WTC11 (cell line): ENCODE measurements at regions of chr3 and their contacts with region 1.

Region 1: GRCh38 chr3:42229942-42230688 is 35.9 kb downstream of the CCK start:
- DNase-seq: no peak
- ATAC-seq: peak; percentile 72
- H3K4me3 Mint-ChIP-seq: no peak overlapping the region
- H3K27ac Mint-ChIP-seq: no peak overlapping the region
- H3K4me1 Mint-ChIP-seq: peaks cover 2% of the 10 kb centered on the region
- H3K27me3 Mint-ChIP-seq: peaks cover 2% of the 10 kb centered on the region; the same call in 1 of the 2 replicates
- CTCF ChIP-seq: peak; percentile 24; the same call in 1 of the 2 replicates

Region 2: GRCh38 chr3:41863024-41863423 is 367.1 kb before region 1 on chr3:
- CTCF ChIA-PET with region 1: no interaction called
- POLR2A ChIA-PET with region 1: no interaction called
- DNase-seq: peak; percentile 52
- ATAC-seq: peak; percentile 100
- H3K4me3 Mint-ChIP-seq: no peak overlapping the region
- H3K27ac Mint-ChIP-seq: no peak overlapping the region
- H3K4me1 Mint-ChIP-seq: no peaks in the 10 kb centered on the region
- H3K27me3 Mint-ChIP-seq: no peaks in the 10 kb centered on the region
- CTCF ChIP-seq: peak; percentile 31; the same call in 1 of the 2 replicates

Region 3: DNA sequence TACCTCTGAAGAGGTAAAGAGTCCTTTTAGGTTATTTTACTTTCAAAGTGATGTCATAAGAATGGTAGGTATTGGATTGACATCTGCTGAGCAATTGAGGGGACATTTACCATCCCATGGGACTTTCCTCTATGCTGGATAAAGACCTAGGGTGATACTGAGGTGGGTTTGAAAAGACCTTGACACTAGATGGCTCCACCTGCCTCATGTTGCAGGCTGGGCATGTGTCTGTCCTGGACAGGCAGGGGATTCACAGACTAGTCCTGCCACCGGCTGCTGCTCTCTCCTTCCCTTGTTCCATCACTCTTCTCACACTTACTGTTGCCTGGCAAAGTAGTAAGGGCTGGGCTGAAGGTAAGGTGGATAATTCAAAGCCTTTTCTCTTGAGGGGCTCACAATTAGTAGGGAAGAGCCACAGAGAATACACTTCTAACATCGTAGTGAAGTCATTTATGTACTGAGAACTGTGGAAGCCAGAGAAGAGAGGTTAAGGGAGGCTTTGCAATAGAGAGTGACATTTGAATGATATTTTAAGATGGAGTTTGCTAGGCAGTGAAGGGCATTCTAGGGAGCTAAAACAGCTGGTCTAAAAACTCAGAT is 111.3 kb before region 1 on chr3:
- CTCF ChIA-PET with region 1: interaction called, 17 read pairs
- POLR2A ChIA-PET with region 1: no interaction called
- DNase-seq: peak; percentile 54
- ATAC-seq: peak; percentile 86
- H3K4me3 Mint-ChIP-seq: no peak overlapping the region
- H3K27ac Mint-ChIP-seq: peak overlapping the region; percentile 37; the same call in 1 of the 2 replicates
- H3K4me1 Mint-ChIP-seq: peaks cover 42% of the 10 kb centered on the region
- H3K27me3 Mint-ChIP-seq: no peaks in the 10 kb centered on the region
- CTCF ChIP-seq: peak; percentile 34; the same call in 1 of the 2 replicates

Region 4: DNA sequence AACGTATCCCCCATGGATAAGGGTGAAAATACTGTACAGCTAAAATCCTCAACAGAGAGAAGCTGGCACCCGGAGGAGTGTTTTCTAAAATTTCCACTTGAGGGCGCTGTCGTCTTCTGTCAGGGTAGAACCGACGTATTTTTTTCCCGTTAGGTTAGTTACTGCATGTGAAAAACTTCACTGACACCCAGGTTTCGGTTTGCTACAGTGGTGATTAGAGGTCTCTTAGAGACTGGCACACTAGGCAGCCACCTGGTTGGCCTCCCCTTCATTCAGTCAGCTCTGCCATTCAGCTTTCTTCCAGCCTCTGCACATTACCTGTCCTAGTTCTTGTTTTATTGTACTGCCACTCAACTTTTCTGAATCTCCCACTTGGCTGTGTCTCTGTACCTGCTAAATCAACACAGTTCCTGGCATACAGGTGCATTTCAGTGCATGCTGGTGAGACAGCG is 17.5 kb after region 1 on chr3:
- CTCF ChIA-PET with region 1: interaction called, 18 read pairs
- POLR2A ChIA-PET with region 1: no interaction called
- DNase-seq: peak; percentile 75
- ATAC-seq: peak; percentile 80
- H3K4me3 Mint-ChIP-seq: no peak overlapping the region
- H3K27ac Mint-ChIP-seq: no peak overlapping the region
- H3K4me1 Mint-ChIP-seq: no peaks in the 10 kb centered on the region
- H3K27me3 Mint-ChIP-seq: peaks cover 20% of the 10 kb centered on the region
- CTCF ChIP-seq: peak; percentile 68

Region 5: DNA sequence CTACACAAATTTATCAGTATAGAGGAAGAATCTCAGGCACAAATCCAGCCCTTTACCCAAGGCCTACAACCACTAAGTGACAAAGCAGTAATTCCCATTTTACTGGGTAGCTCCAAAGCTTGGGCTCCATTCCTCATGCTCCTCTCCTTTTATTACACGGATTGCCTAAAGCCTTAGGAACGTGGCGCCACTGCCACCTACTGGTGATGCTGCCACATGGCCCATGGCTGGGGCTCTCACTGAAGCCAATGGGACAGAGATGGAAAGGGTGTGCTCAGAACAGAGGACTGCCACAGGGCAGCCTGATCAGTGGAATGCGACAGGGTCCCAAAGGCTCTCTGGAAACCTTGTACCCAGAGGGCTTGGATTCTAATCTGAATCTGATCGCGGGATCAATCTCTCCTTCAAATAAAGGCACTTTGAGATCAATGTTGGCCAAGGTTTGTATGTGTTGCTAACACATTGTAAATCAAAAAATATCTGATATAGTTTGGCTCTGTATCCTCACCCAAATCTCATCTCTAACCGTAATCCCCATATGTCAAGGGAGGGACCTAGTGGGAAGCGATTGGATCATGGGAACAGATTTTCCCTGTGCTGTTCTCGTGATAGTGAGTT is 213.8 kb after region 1 on chr3:
- CTCF ChIA-PET with region 1: interaction called, 53 read pairs
- POLR2A ChIA-PET with region 1: no interaction called
- DNase-seq: peak; percentile 96
- ATAC-seq: peak; percentile 91
- H3K4me3 Mint-ChIP-seq: no peak overlapping the region
- H3K27ac Mint-ChIP-seq: no peak overlapping the region
- H3K4me1 Mint-ChIP-seq: peaks cover 56% of the 10 kb centered on the region
- H3K27me3 Mint-ChIP-seq: no peaks in the 10 kb centered on the region
- CTCF ChIP-seq: peak; percentile 84

Region 6: DNA sequence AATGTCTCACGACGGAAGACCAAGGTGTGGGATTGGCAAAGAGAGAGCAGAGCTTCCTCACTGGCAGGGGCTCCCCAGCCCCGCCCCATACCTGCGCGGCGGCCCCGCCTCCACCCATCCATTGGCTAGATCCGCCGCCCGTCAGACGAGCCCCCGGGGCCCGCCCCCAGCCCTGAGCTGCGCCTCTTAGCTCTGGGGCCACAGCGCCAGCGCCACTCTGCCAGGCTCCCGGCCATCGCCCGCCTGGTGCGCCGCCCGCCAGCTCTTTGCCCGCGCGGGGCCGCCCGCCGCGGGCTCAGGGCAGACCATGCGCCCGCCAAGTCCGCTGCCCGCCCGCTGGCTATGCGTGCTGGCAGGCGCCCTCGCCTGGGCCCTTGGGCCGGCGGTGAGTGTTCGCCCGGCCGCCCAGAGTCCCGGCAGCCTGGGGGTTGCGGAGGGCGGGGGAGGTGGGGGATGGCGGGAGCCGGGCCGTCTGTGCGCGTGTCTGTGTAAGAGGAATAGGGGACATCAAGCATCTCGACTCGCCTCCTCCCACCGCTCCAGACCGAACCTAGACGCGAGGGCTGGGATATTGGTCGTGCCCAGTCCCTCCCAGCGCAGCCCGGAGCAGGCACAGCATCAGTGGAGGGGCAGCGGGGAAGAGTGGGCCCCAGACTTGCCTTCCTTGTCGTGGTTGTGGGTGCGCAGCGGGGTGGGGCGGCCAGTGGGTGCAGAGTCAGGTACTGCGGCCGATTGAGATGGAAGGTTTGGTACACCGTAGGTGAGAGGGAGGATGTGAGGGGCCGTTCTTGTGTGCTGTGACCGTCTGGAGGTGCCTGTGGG is 272.5 kb after region 1 on chr3 and contains the start of gene VIPR1:
- CTCF ChIA-PET with region 1: interaction called, 18 read pairs
- POLR2A ChIA-PET with region 1: no interaction called
- DNase-seq: peak; percentile 95
- ATAC-seq: peak; percentile 92
- H3K4me3 Mint-ChIP-seq: peak within 1 kb of the TSS; percentile 88
- H3K27ac Mint-ChIP-seq: no peak within 1 kb of the TSS
- H3K4me1 Mint-ChIP-seq: peaks cover 41% of the 10 kb centered on the region
- H3K27me3 Mint-ChIP-seq: peaks cover 63% of the 10 kb centered on the region
- CTCF ChIP-seq: no peak
- total RNA-seq, gene VIPR1: 7.1 to 9.4 TPM (median 7.2 TPM) in 3 replicates

Region 7: DNA sequence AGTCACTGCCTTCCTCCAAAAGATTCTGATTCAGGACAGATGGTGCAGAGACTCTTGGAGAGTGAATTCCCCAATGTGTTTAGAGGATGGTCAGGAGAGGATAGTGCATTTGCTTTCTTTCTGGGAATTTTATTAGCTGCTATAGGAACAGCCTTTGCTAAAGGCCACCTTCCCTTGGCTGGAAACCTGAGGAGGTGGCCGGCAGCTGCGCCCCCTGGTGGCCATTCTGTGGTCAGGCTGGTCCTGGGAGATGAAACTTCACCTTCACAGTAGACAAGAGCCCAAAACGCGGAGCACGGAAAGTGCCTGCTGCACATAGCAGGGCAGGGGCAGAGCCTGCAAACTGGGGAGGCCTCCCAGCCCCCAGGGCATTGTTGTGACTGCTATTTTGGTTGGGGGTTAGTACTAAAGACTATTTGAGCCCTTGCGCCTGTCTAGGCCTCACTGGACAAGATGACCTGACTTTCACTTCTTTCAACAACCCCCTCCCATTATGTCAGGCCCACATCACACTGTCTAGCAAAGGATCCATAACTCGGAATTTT is 317.4 kb after region 1 on chr3:
- CTCF ChIA-PET with region 1: interaction called, 18 read pairs
- POLR2A ChIA-PET with region 1: no interaction called
- DNase-seq: peak; percentile 83
- ATAC-seq: peak; percentile 91
- H3K4me3 Mint-ChIP-seq: no peak overlapping the region
- H3K27ac Mint-ChIP-seq: no peak overlapping the region
- H3K4me1 Mint-ChIP-seq: peaks cover 3% of the 10 kb centered on the region; the same call in 1 of the 2 replicates
- H3K27me3 Mint-ChIP-seq: no peaks in the 10 kb centered on the region
- CTCF ChIP-seq: peak; percentile 98